Prostate gland (tissue), 2 donors: ENCODE measurements at regions of chr18 and their contacts with region 1.

Region 1: GRCh38 chr18:961644-962355 is 57.1 kb downstream of the ADCYAP1 start:
- DNase-seq: no peak
- H3K4me3 ChIP-seq: no peak overlapping the region
- H3K27ac ChIP-seq: no peak overlapping the region
- H3K4me1 ChIP-seq: no peaks in the 10 kb centered on the region
- H3K27me3 ChIP-seq: no peaks in the 10 kb centered on the region
- CTCF ChIP-seq: peak; percentile 52 to 80 (median 55)
- POLR2A ChIP-seq: no peak

Region 2: GRCh38 chr18:864872-865273 is 96.9 kb before region 1 on chr18:
- intact Hi-C with region 1: loop called (anchors 10 kb)
- DNase-seq: peak; percentile 58
- H3K4me3 ChIP-seq: no peak overlapping the region
- H3K27ac ChIP-seq: no peak overlapping the region
- H3K4me1 ChIP-seq: no peaks in the 10 kb centered on the region
- H3K27me3 ChIP-seq: no peaks in the 10 kb centered on the region
- CTCF ChIP-seq: peak; percentile 67 to 85 (median 76)
- POLR2A ChIP-seq: no peak